ENCODE measurements at regions of chrX and their contacts with region 1.

Region 1: GRCh38 chrX:69222103-69223090 is 57.1 kb upstream of the PJA1 start:
- DNase-seq: peak; percentile 29
- H3K4me3 Mint-ChIP-seq: no peak overlapping the region
- H3K27ac Mint-ChIP-seq: no peak overlapping the region
- H3K4me1 Mint-ChIP-seq: no peaks in the 10 kb centered on the region
- H3K27me3 Mint-ChIP-seq: no peaks in the 10 kb centered on the region

Region 2: DNA sequence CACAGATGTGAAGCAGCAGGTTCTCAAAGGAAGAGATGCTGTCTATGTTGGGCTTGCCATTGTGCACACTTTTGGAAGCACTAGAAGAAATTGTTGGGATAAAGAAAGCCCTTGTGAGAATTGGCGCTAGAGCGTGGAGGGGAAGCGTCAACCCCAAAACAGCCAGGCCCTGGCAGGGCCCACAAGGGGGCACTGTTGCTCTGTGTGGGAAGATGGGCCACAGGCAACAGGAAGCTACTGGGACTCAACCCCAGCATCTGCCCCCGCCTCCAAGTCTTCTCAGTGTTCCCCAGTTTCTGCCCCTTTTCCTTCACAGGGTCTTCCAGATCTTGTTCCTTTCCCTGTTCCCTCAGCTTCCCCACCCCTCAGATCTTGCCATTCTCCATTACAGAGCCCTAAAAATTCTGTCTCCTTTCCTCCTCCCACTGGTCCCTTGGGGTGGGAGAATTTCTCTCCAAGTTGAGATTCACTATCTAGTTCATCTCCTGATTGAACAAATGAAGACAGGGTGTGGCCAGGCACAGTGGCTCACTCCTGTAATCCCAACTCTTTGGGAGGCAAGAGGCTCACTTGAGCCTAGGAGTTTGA is 489.4 kb before region 1 on chrX:
- intact Hi-C with region 1: loop called (anchors 1 kb)
- DNase-seq: peak; percentile 41
- H3K4me3 Mint-ChIP-seq: no peak overlapping the region
- H3K27ac Mint-ChIP-seq: no peak overlapping the region
- H3K4me1 Mint-ChIP-seq: no peaks in the 10 kb centered on the region
- H3K27me3 Mint-ChIP-seq: peaks cover 1% of the 10 kb centered on the region

Region 3: DNA sequence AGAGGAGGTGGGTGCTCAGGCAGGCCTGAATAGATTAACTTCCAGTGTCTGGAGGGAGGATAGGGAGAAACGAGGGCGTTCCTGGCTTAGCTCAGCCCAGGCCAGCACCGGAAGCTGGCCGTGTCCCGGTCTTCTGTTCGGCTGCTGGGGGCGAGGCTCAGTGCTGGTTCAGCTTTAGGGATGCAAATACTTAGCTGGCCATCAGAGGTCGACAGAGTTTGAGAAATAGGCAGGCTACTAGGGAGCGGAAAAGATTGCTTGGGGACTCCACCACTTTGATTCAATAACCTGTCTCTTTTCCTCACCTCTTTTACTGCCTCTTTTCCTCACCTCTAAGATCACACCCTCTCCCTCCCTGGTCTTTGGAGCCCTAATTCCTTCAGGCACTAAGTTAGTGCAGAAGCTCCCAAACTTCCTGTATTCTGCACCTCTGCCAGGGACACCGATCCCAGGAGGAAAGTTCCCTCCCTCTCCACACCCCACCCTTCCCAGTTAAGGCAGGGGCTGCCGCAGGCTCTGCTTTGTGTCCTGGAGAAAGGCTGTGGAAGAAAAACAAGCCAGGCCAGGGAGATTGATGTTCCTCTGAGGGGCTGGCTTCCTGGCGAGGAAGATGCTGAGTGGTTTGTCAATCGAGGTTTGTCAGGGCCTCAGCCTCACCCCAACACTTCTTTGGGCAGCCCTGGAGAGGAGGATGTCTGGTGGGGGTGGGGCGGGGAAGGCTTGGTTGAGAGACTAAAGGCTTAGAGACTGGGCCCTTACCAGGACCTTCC is 399.6 kb before region 1 on chrX:
- intact Hi-C with region 1: loop called (anchors 1 kb)
- DNase-seq: no peak
- H3K4me3 Mint-ChIP-seq: no peak overlapping the region
- H3K27ac Mint-ChIP-seq: no peak overlapping the region
- H3K4me1 Mint-ChIP-seq: peaks cover 8% of the 10 kb centered on the region
- H3K27me3 Mint-ChIP-seq: peaks cover 2% of the 10 kb centered on the region

Region 4: DNA sequence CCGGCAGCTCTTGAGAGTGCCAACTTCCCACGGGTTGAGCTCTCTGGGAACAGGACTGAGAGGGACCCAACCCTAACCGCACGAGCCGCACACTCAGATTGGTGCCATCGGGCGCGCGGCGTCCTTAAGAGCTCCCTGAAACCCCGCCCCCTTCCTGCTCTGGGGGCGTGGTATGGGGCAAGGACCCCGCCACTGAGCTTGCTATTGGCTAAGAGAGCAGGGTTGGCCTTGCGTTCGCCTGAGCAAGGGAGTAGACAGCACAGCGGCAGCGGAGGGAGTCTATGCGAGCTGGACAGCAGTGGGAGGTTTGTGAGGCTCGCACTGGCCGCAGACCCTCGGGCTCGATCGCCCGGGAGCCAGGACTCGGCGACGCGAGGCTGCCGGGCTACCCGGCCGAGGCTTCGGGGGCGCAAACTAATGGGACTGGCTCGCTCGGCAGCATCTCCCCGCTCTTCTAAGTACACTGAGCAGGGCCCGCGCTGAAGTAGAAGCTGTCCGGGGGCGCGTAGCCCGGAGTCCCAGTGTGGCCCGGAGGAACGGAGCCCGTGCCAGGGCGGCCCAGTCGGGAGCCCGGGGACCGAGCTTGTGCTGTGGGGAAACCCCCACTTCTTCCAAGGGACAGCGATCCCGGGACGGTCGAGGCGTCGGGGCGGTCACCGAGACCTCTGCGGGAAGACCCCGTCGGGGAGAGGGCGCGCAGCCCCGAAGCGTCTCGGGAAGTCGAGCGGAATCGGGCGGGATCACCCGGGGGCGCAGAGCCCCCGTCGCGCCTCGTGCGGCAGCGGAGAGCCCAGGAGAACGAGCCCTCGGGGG is 393.5 kb before region 1 on chrX and contains the start of gene EFNB1:
- intact Hi-C with region 1: loop called (anchors 1 kb)
- DNase-seq: peak; percentile 81
- H3K4me3 Mint-ChIP-seq: peak within 1 kb of the TSS; percentile 93
- H3K27ac Mint-ChIP-seq: peak within 1 kb of the TSS; percentile 69
- H3K4me1 Mint-ChIP-seq: peaks cover 23% of the 10 kb centered on the region
- H3K27me3 Mint-ChIP-seq: peaks cover 16% of the 10 kb centered on the region
- total RNA-seq, gene EFNB1: 7.3 and 8.0 TPM in 2 replicates

Region 5: DNA sequence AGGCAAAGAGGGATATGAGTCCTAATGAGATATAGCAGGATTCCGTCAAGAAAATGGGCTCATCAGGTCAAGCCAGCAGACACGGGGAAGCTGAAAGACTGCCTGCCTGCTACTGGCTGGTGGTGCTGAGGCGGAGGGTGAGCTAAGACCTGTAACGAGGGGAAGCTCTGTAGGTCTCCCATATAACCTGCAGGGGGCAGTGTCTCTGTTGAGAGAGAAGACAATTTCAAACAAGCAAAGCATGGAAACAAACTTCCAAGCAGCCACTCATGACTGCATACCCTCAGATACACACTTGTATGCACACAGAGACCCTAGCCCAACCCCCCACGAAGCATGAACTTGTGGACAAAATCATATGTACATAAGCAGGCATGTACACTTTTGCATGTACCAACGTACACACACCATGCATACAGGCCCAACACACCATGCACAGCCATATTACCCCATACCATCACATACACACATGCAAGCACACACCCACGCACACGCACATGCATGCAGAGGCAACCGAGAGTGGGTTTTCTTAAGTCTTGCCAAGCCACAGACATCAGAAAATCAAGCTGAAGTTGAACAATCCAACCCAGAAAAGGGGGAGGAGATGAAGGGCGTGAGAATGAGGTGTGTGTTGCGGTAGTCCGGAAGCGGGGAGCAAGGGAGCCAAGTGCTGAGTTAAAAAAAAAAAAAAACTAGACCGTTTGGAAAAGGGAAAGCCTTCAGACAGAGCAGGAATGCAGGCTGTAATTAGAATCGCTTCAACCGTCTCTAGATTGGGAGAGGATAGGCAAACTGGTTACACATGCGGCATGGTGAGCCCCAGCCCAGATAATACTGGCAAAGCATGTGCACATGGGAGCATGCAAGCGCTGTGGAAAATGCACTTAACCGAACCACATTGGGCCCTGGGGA is 128.2 kb before region 1 on chrX:
- intact Hi-C with region 1: loop called (anchors 1 kb)
- DNase-seq: peak; percentile 1
- H3K4me3 Mint-ChIP-seq: no peak overlapping the region
- H3K27ac Mint-ChIP-seq: no peak overlapping the region
- H3K4me1 Mint-ChIP-seq: no peaks in the 10 kb centered on the region
- H3K27me3 Mint-ChIP-seq: peaks cover 2% of the 10 kb centered on the region

Region 6: DNA sequence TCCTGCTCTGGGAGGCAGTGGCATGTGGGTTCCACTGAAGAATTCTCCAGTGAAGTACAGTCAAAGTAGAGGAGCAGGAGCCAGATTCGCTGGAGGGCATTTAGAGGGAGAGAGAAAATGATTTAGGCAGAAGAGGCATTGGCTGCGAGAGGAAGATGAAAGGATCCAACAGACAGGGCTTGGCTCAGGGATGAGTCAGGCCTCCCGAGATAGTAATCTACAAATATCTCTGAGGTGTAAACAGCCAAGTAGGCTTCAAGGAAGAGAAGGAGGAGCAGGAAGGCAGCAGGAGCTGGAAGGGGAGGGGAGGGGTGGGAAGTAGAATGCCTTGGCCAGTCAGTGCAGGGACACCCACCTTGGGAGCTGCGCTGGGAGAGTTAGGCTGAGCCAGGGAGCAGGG is 112.7 kb before region 1 on chrX:
- intact Hi-C with region 1: no loop called
- DNase-seq: no peak
- H3K4me3 Mint-ChIP-seq: no peak overlapping the region
- H3K27ac Mint-ChIP-seq: no peak overlapping the region
- H3K4me1 Mint-ChIP-seq: no peaks in the 10 kb centered on the region
- H3K27me3 Mint-ChIP-seq: peaks cover 3% of the 10 kb centered on the region

Region 7: DNA sequence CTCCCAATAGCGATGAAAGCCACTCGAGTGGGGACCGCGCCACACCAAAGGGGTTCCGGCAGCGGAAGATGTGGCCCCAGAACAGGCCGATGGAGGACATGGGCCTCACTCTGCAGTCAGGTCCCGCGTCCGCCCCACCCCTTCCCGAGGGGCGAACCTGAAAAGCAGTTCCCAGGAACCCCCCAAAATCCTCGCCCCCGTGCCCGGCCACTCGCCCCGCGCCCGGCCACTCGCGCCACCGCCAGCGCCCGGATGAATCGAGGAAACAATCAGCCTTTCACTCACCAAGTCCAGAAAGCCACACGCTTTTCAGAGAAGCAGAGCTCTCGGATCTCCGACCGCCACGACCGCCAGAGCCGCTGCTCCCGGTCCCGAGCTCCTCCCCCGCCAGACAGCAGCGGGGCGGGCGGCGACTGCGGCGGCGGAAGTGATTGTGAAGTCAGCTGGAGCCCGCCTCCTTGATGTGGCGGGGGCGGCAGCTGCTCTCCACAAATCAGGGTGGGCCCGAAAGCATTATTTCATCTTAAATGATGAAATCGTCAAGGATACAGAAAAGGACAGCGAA is 57.2 kb before region 1 on chrX and contains the start of gene PJA1:
- intact Hi-C with region 1: loop called (anchors 5 kb)
- DNase-seq: peak; percentile 50
- H3K4me3 Mint-ChIP-seq: peak within 1 kb of the TSS; percentile 92
- H3K27ac Mint-ChIP-seq: peak within 1 kb of the TSS; percentile 94
- H3K4me1 Mint-ChIP-seq: peaks cover 25% of the 10 kb centered on the region
- H3K27me3 Mint-ChIP-seq: peaks cover 7% of the 10 kb centered on the region
- total RNA-seq, gene PJA1: 14.5 and 15.6 TPM in 2 replicates

Region 8: DNA sequence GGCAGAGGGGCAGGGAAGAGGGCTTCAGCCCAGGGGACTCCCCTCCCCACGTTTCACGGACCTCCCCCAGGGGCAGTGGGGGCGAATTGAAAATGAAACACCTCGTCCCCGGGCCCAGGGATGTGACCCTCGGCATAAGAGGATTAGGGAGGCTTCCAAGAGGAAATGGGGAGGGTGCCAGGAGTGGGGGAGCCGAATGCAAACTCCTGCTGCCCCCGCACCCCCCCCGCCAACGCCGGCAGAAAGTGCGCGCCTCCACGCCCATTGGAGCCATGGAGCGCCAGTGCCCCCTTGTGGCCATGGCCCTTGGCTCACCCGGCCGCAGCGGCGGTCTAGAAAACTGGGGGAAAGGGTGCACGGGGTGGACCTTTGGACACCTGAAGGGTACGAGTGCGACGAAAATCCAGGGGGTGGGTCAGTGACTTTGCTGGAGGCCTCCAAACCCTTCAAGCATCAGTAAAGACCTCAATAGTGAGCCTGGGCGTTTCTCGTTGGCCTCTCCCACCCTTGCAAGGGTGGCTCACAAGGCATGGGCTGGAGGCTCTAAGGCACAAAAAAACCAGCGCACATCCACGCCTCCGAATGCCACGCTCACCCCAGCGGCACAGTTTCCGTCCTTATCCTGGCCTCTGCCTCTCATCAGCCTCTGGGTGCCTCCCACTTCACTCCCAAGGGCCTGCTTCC is 63.6 kb after region 1 on chrX:
- intact Hi-C with region 1: loop called (anchors 1 kb)
- DNase-seq: peak; percentile 30
- H3K4me3 Mint-ChIP-seq: no peak overlapping the region
- H3K27ac Mint-ChIP-seq: no peak overlapping the region
- H3K4me1 Mint-ChIP-seq: no peaks in the 10 kb centered on the region
- H3K27me3 Mint-ChIP-seq: no peaks in the 10 kb centered on the region